CD8-positive, alpha-beta T cell (primary cell): ENCODE measurements at regions of chr19 and their contacts with region 1.

Region 1: GRCh38 chr19:58581227-58582151 is 8.4 kb upstream of the MZF1 start:
- DNase-seq: peak; percentile 81 to 93 (median 91)
- ATAC-seq: peak; percentile 100
- H3K4me3 ChIP-seq: no peak overlapping the region
- H3K4me3 Mint-ChIP-seq: no peak overlapping the region
- H3K27ac ChIP-seq: peak overlapping the region in 1 of 2 experiments; percentile 56
- H3K27ac Mint-ChIP-seq: peak overlapping the region; percentile 82
- H3K4me1 ChIP-seq: peaks cover 6% of the 10 kb centered on the region
- H3K4me1 Mint-ChIP-seq: peaks cover 11% of the 10 kb centered on the region
- H3K27me3 ChIP-seq: no peaks in the 10 kb centered on the region
- H3K27me3 Mint-ChIP-seq: no peaks in the 10 kb centered on the region
- CTCF ChIP-seq: peak; percentile 88

Region 2: DNA sequence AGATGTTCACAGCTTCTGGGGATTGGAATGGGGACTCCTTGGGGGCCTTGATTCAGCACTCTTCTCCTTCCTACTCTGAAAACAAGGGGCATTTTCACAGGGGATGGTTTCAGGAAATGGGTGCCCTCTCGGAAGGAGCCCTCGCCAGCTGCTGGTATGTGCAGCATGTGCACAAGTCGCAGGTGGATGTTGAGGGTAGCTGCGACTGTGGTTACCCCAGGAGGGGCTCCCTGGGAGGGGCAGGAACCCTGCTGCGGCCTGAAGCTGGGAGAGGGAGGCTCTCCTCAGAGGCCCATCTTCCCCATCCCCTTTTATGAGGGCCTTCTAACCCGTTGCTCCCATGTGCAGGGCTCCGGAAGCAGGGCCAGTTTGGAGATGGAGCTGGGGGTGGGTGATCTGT is 99.1 kb before region 1 on chr19:
- CTCF ChIA-PET with region 1: no interaction called
- POLR2A ChIA-PET with region 1: no interaction called
- intact Hi-C with region 1: no loop called
- DNase-seq: no peak
- ATAC-seq: no peak
- H3K4me3 ChIP-seq: no peak overlapping the region
- H3K4me3 Mint-ChIP-seq: no peak overlapping the region
- H3K27ac ChIP-seq: no peak overlapping the region
- H3K27ac Mint-ChIP-seq: no peak overlapping the region
- H3K4me1 ChIP-seq: no peaks in the 10 kb centered on the region
- H3K4me1 Mint-ChIP-seq: no peaks in the 10 kb centered on the region
- H3K27me3 ChIP-seq: no peaks in the 10 kb centered on the region
- H3K27me3 Mint-ChIP-seq: no peaks in the 10 kb centered on the region
- CTCF ChIP-seq: no peak

Region 3: DNA sequence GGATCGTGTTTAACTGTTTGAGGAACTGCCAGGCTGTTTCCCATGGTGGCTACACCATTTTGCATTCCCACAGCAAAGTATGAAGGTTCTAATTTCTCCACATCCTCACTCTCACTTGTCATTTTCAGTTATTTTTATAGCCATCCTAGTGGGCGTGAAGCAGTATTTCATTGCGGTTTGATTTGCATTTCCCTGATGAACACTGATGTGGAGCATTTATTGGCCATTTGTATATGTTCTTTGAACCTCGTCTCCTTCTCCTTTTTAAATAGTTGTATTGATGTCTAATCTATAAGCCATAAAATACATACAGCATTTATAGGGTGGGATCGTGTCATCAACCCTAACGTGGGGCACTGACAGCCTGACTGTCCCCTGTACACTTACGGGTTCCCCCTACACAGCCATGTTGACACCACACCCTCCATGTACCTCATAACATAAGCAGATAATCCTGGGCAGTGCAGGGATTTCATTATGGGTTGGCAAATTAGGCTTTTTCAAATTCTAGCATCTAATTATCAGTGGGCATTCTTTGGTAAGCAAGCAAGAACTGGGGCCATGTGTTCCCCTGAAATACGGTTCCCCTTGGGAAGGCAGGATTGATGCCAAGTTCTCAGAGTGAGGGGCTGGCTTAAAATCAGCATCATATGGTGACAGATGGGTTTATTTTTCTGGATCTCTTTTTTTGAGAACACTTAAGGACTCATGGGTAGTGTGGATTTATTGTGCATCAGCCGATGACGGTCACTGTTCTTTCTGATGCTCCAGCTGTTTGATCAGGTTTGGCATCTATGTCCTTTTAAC is 50.3 kb before region 1 on chr19:
- CTCF ChIA-PET with region 1: interaction called, 11 read pairs
- POLR2A ChIA-PET with region 1: no interaction called
- intact Hi-C with region 1: no loop called
- DNase-seq: no peak
- ATAC-seq: no peak
- H3K4me3 ChIP-seq: no peak overlapping the region
- H3K4me3 Mint-ChIP-seq: no peak overlapping the region
- H3K27ac ChIP-seq: no peak overlapping the region
- H3K27ac Mint-ChIP-seq: no peak overlapping the region
- H3K4me1 ChIP-seq: no peaks in the 10 kb centered on the region
- H3K4me1 Mint-ChIP-seq: no peaks in the 10 kb centered on the region
- H3K27me3 ChIP-seq: no peaks in the 10 kb centered on the region
- H3K27me3 Mint-ChIP-seq: peaks cover 3% of the 10 kb centered on the region
- CTCF ChIP-seq: no peak